ENCODE measurements at regions of chr2 and their contacts with region 1.

Region 1: DNA sequence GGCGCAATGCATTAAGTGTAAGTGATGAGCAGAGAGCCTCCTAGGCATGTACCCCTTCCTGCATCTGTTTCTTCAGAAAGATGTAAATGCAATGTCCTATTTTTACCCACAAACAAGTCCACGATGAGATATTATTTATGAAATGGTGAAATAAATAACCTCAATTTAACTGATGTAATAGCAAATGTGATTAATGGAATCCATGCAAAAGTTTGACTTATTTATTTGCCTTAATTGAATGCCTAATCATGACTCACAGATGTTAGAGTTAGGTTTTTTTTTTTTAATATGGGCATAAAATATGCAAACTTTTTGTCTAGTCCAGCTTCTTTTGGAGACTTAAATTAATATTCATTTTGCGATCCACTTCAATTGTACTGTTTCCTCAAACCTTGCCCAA is 67.7 kb upstream of the ITGA4 start:
- DNase-seq: no peak
- H3K4me3 Mint-ChIP-seq: no peak overlapping the region
- H3K27ac Mint-ChIP-seq: no peak overlapping the region
- H3K4me1 Mint-ChIP-seq: peaks cover 8% of the 10 kb centered on the region
- H3K27me3 Mint-ChIP-seq: no peaks in the 10 kb centered on the region

Region 2: DNA sequence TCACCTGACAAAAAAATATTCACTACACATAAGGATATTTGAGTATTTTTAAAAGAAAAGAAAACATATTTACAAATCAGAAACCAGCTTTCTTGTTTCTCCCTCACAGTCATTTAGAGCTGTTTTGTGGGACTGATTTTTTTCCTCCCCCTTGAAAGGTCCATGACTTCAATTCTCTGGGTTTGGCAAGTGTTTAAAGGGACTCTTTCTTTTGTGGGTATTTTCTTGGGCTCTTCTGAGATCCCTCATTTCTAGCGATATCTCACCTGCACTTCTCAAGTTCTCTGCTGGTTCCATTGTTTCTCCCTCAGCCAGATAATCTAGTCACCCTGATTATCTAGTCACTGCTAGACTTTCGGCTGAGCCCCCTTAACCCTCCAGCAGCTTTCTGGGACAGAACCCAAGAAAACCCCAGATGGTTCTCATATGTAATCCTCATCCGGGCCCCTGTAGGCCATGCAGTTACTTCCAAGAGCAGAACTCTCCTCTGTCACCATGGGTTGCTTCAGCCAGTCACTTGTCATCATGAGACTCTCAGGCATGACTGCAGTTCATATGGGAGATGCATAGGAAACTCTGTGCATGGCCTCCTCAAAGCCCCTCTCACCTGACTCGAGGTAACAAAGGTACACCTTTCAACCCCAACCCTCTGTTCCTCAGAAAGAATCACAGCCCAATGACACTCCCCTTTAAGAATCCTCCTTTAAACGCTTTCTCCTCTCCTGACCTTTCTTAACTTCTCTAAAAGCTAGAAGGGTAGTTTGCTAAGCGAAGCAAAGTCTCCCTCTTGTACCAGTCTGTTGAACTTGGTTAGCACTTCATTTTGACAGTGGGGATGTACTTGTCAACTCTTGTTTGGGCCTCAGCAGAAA is 31.0 kb after region 1 on chr2:
- intact Hi-C with region 1: loop called (anchors 5 kb)
- DNase-seq: no peak
- H3K4me3 Mint-ChIP-seq: no peak overlapping the region
- H3K27ac Mint-ChIP-seq: peak overlapping the region; percentile 69
- H3K4me1 Mint-ChIP-seq: peaks cover 19% of the 10 kb centered on the region
- H3K27me3 Mint-ChIP-seq: no peaks in the 10 kb centered on the region